Panc1 (cell line): ENCODE measurements at regions of chr11 and their contacts with region 1.

Region 1: DNA sequence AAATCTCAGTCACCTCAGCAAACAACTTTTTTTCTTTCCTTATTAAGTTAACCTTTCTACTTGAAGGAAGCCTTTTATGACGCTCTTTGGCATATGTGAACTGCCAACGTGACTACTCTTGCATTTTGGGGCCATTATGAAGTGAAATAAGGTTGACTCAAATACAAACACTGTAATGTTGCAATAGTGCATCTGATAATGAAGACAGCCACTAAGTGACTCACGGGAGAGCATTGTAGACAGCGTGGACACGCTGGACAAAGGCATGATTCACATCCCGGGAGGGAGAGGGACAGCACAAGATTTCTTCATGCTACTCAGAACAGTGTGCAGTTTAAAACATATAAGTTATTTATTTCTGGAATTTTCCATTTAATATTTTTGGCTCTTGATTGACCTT is 560.8 kb downstream of the ETS1 start:
- DNase-seq: peak; percentile 46
- ATAC-seq: no peak
- H3K4me3 ChIP-seq: no peak overlapping the region
- H3K27ac ChIP-seq: no peak overlapping the region
- H3K4me1 ChIP-seq: no peaks in the 10 kb centered on the region
- H3K27me3 ChIP-seq: no peaks in the 10 kb centered on the region
- CTCF ChIP-seq: no peak

Region 2: GRCh38 chr11:128069665-128070064 is 43.1 kb after region 1 on chr11:
- CTCF ChIA-PET with region 1: no interaction called
- POLR2A ChIA-PET with region 1: no interaction called
- in situ Hi-C with region 1: no loop called
- intact Hi-C with region 1: no loop called
- DNase-seq: no peak
- ATAC-seq: no peak
- H3K4me3 ChIP-seq: no peak overlapping the region
- H3K27ac ChIP-seq: no peak overlapping the region
- H3K4me1 ChIP-seq: no peaks in the 10 kb centered on the region
- H3K27me3 ChIP-seq: no peaks in the 10 kb centered on the region
- CTCF ChIP-seq: no peak

Region 3: DNA sequence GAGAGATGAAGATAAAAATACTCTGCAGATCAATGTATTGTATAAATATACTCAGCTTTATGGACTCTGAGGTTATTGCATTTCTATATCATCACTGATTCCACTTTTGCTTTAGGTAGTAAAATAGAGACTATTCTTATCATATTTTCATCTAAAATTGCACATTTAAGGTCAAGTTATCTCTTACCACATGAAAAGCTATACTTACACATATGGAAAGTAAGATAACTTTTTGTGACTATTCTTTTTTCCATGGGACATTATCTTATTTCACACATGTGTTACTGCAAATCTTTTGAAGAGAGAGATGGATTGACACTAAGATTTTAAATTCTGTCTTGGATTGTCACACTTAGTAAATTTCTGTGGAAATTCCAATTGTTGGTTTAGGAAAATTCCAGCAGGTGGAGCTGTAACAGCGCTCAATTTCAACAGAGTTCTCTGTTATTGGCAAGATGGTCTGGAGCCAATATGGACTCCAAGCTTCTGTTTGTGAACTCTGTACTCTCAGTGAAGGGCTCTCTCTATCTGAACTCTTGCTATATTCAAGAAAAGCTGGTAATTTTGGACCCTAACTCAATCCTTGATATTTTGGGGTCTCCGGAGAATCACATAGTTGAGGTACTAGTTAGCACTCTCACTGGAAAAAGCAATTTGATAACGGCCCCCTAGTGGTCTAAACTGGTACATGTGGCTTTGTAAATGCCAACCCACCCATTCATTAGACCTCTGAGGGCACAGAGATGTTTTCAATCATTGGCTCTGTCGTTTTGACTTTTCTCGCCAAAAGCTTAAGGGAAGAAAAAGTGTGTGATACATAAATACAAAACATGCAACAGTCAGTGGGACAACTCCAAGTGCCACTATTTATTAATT is 131.1 kb after region 1 on chr11:
- CTCF ChIA-PET with region 1: no interaction called
- POLR2A ChIA-PET with region 1: no interaction called
- in situ Hi-C with region 1: no loop called
- intact Hi-C with region 1: loop called (anchors 1 kb)
- DNase-seq: peak; percentile 81
- ATAC-seq: peak; percentile 95
- H3K4me3 ChIP-seq: peak overlapping the region in 1 of 2 experiments; percentile 24; a peak in 2 of 4 replicates
- H3K27ac ChIP-seq: no peak overlapping the region
- H3K4me1 ChIP-seq: no peaks in the 10 kb centered on the region
- H3K27me3 ChIP-seq: peaks cover 7% of the 10 kb centered on the region; the same call in 1 of the 2 replicates
- CTCF ChIP-seq: peak; percentile 97